IMR-90 (cell line): ENCODE measurements at regions of chr7 and their contacts with region 1.

Region 1: GRCh38 chr7:129224251-129225205 is at the start of gene AHCYL2:
- DNase-seq: peak; percentile 96
- ATAC-seq: peak; percentile 95
- H3K4me3 ChIP-seq: peak within 1 kb of the TSS; percentile 72
- H3K27ac ChIP-seq: peak within 1 kb of the TSS; percentile 78
- H3K4me1 ChIP-seq: no peaks in the 10 kb centered on the region; the same call in 1 of the 2 replicates
- H3K27me3 ChIP-seq: no peaks in the 10 kb centered on the region
- CTCF ChIP-seq: no peak
- POLR2A ChIP-seq: peak; percentile 61
- RAD21 ChIP-seq: no peak
- total RNA-seq, gene AHCYL2: 5.7 and 6.7 TPM in 2 replicates

Region 2: DNA sequence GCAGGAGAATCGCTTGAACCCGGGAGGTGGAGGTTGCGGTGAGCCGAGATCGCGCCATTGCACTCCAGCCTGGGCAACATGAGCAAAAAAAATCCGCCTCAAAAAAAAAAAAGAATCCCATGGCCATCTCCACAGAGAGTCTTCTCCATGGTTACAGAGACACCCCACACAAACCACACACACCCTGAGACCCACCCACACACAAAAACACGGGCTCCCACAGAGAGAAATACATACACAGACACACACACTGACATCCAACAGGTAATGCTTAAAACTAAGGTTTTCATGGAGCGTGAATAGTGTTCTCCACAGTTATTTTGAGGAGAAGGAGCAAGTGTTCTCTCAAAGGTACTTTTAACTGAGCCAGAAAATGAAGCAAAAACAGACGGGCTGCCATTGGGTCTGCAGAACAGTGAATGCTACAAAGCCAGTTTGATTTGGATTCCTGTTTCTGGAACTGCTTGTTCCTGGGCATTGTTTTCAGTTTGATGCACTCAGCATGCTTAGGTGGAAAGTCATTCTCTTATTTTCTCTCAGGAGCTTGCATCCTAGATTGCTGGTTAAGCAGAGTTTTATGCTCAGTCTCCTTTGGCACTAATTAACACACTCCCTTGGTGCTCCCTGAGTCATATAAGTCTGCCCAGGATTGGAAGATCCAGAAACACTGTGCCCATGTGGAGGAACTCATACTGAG is 15.7 kb after region 1 on chr7:
- CTCF ChIA-PET with region 1: interaction called, 5 read pairs
- POLR2A ChIA-PET with region 1: interaction called, 29 read pairs
- dilution Hi-C with region 1: no loop called
- in situ Hi-C with region 1: no loop called
- intact Hi-C with region 1: no loop called
- DNase-seq: no peak
- ATAC-seq: no peak
- H3K4me3 ChIP-seq: no peak overlapping the region
- H3K27ac ChIP-seq: no peak overlapping the region
- H3K4me1 ChIP-seq: no peaks in the 10 kb centered on the region
- H3K27me3 ChIP-seq: no peaks in the 10 kb centered on the region
- CTCF ChIP-seq: no peak
- POLR2A ChIP-seq: no peak
- RAD21 ChIP-seq: no peak

Region 3: DNA sequence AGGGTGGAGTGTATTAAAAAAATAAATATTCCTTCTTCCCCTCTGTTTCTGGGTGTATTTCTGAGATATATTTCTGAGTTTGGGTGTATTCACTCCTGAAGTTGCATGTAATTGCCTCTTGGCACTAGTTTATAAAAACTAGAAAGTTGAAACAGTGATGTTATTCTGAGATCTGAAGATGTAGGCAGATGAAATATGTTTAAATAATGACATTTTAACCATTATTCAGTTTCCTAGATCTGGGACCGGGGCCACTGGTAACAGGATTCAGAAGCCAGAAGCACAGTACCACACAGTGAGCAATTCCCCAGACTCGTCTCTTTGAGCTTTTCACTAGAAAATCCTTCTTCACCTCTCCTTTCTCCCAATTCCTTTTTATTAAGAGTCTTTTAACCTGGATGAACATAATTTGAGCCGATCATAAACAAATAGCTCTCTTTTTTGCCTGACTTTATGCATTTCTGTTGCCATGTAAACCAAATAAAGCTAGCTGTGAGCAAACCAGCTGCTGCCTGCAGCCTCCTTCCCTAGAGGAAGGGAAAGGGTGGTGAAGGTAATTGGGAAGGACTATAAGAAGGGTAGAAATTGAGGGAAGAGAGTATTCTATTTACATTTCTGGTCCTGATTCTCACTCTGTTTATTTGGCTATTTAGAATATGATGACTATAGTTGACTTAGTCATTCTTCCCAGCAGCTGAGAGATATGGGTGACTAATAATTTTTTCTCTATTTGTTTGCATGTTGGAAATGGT is 107.9 kb after region 1 on chr7:
- CTCF ChIA-PET with region 1: interaction called, 8 read pairs
- POLR2A ChIA-PET with region 1: no interaction called
- dilution Hi-C with region 1: no loop called
- in situ Hi-C with region 1: no loop called
- intact Hi-C with region 1: loop called (anchors 2 kb)
- DNase-seq: peak; percentile 93
- ATAC-seq: peak; percentile 95
- H3K4me3 ChIP-seq: no peak overlapping the region
- H3K27ac ChIP-seq: peak overlapping the region; percentile 66; the same call in 1 of the 2 replicates
- H3K4me1 ChIP-seq: peaks cover 3% of the 10 kb centered on the region; the same call in 1 of the 2 replicates
- H3K27me3 ChIP-seq: no peaks in the 10 kb centered on the region
- CTCF ChIP-seq: no peak
- POLR2A ChIP-seq: peak; percentile 52; the same call in 1 of the 2 replicates
- RAD21 ChIP-seq: no peak